GM12878 (cell line): ENCODE measurements at regions of chr20 and their contacts with region 1.

Region 1: GRCh38 chr20:45044084-45044573 is 56.8 kb downstream of the KCNS1 start:
- DNase-seq: no peak
- ATAC-seq: peak; percentile 88
- H3K4me3 ChIP-seq: no peak overlapping the region
- H3K27ac ChIP-seq: no peak overlapping the region
- H3K4me1 ChIP-seq: no peaks in the 10 kb centered on the region
- H3K27me3 ChIP-seq: no peaks in the 10 kb centered on the region
- CTCF ChIP-seq: peak; percentile 83 to 89 (median 83)
- EP300 ChIP-seq: no peak
- POLR2A ChIP-seq: no peak
- RAD21 ChIP-seq: peak; percentile 91

Region 2: GRCh38 chr20:44790638-44791393 is 253.3 kb before region 1 on chr20:
- CTCF ChIA-PET with region 1: no interaction called
- POLR2A ChIA-PET with region 1: no interaction called
- RAD21 ChIA-PET with region 1: no interaction called
- SMC1A ChIA-PET with region 1: no interaction called
- in situ Hi-C with region 1: no loop called
- intact Hi-C with region 1: no loop called
- DNase-seq: no peak
- ATAC-seq: no peak
- H3K4me3 ChIP-seq: no peak overlapping the region
- H3K27ac ChIP-seq: no peak overlapping the region
- H3K4me1 ChIP-seq: no peaks in the 10 kb centered on the region
- H3K27me3 ChIP-seq: no peaks in the 10 kb centered on the region; a peak in 2 of 4 replicates
- CTCF ChIP-seq: no peak
- EP300 ChIP-seq: no peak
- POLR2A ChIP-seq: no peak
- RAD21 ChIP-seq: no peak

Region 3: GRCh38 chr20:45011108-45011526 is 33.0 kb before region 1 on chr20:
- CTCF ChIA-PET with region 1: interaction called, 11 read pairs
- POLR2A ChIA-PET with region 1: no interaction called
- RAD21 ChIA-PET with region 1: interaction called, 3 read pairs
- SMC1A ChIA-PET with region 1: interaction called, 5 read pairs
- in situ Hi-C with region 1: no loop called
- intact Hi-C with region 1: no loop called
- DNase-seq: no peak
- ATAC-seq: peak; percentile 79
- H3K4me3 ChIP-seq: no peak overlapping the region
- H3K27ac ChIP-seq: no peak overlapping the region
- H3K4me1 ChIP-seq: no peaks in the 10 kb centered on the region
- H3K27me3 ChIP-seq: no peaks in the 10 kb centered on the region
- CTCF ChIP-seq: peak; percentile 55 to 64 (median 61)
- EP300 ChIP-seq: no peak
- POLR2A ChIP-seq: no peak
- RAD21 ChIP-seq: peak; percentile 67

Region 4: GRCh38 chr20:45061244-45061643 is 17.1 kb after region 1 on chr20:
- CTCF ChIA-PET with region 1: interaction called, 30 read pairs
- POLR2A ChIA-PET with region 1: interaction called, 3 read pairs
- RAD21 ChIA-PET with region 1: interaction called, 15 read pairs
- SMC1A ChIA-PET with region 1: interaction called, 5 read pairs
- in situ Hi-C with region 1: no loop called
- intact Hi-C with region 1: no loop called
- DNase-seq: no peak
- ATAC-seq: no peak; the same call in 2 of the 3 replicates
- H3K4me3 ChIP-seq: no peak overlapping the region
- H3K27ac ChIP-seq: no peak overlapping the region
- H3K4me1 ChIP-seq: no peaks in the 10 kb centered on the region
- H3K27me3 ChIP-seq: no peaks in the 10 kb centered on the region
- CTCF ChIP-seq: no peak
- EP300 ChIP-seq: no peak
- POLR2A ChIP-seq: no peak
- RAD21 ChIP-seq: no peak

Region 5: GRCh38 chr20:45080867-45081624 is 36.9 kb after region 1 on chr20:
- CTCF ChIA-PET with region 1: interaction called, 15 read pairs
- POLR2A ChIA-PET with region 1: no interaction called
- RAD21 ChIA-PET with region 1: interaction called, 6 read pairs
- SMC1A ChIA-PET with region 1: interaction called, 5 read pairs
- in situ Hi-C with region 1: no loop called
- intact Hi-C with region 1: no loop called
- DNase-seq: no peak
- ATAC-seq: peak; percentile 75
- H3K4me3 ChIP-seq: no peak overlapping the region
- H3K27ac ChIP-seq: no peak overlapping the region
- H3K4me1 ChIP-seq: no peaks in the 10 kb centered on the region
- H3K27me3 ChIP-seq: no peaks in the 10 kb centered on the region
- CTCF ChIP-seq: peak; percentile 10 to 31 (median 27); a peak in 2 of 6 replicates
- EP300 ChIP-seq: no peak
- POLR2A ChIP-seq: no peak
- RAD21 ChIP-seq: no peak

Region 6: DNA sequence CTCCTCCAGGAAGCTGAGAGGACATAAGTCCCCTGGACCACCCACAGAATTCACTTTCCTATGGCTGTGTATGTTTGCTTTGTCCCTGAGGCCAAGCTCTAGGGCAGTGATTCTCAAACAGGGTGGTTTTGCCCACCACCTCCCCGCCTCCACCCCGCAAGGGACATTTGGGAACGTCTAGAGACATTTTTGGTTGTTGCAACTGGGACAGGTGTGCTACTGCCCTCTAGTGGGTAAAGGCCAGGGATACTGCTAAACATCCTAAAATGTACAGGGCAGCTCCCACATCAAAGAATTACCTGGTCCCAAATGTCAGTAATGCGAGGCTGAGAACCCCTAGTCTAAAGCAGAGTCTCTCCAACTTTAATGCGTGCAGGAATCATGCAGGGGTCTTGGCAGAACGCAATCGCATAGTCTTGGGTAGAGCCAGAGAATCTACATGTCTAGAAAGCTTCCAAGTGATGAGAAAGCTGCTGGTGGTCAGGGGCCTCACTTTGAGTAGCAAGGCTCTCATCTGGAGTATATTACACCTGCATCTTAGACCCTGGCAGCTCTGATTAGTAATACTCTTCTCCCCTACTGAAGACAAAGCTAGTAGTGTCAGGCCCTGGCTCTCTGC is 51.7 kb after region 1 on chr20:
- CTCF ChIA-PET with region 1: interaction called, 162 read pairs
- POLR2A ChIA-PET with region 1: no interaction called
- RAD21 ChIA-PET with region 1: interaction called, 85 read pairs
- SMC1A ChIA-PET with region 1: interaction called, 108 read pairs
- in situ Hi-C with region 1: no loop called
- intact Hi-C with region 1: loop called (anchors 1 kb)
- DNase-seq: peak; percentile 27
- ATAC-seq: peak; percentile 82
- H3K4me3 ChIP-seq: no peak overlapping the region
- H3K27ac ChIP-seq: no peak overlapping the region
- H3K4me1 ChIP-seq: no peaks in the 10 kb centered on the region
- H3K27me3 ChIP-seq: peaks cover under 1 to 7% of the 10 kb centered on the region in 2 experiments; a peak in 3 of 4 replicates
- CTCF ChIP-seq: peak; percentile 69 to 86 (median 84)
- EP300 ChIP-seq: no peak
- POLR2A ChIP-seq: no peak
- RAD21 ChIP-seq: peak; percentile 86

Region 7: DNA sequence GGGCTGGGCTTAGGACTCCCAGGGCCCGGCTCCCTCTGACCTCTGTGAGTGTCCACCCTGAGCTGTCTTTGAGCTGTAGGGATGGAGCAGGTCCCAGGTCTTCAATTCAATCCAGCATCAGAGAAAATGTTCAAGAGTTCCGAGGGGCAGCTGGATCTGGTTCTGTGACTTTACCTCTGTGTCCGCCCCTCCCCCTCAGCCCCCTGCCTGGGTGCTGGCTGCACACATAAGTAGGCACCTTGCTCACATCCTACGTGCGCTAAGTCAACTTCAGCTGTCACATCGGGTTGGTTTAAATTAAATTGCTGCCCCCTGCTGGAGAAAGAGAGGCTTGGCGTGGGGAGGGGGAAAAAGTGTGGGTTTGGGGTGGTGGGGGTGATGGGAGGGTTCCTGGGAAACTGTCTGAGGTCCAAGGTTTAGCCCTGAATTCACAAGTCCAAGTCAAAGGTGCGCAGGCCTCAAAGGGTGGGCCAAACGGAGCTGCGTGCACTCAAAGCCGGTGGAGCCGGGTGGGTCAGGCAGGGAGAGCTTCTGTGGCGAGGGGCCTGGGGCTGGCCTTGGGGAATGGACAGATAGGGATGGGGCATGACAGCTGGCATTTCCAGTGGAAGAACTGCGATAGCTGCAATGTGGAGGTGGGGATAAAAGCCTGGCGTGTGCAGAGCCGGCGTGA is 67.8 kb after region 1 on chr20:
- CTCF ChIA-PET with region 1: interaction called, 67 read pairs
- POLR2A ChIA-PET with region 1: no interaction called
- RAD21 ChIA-PET with region 1: interaction called, 14 read pairs
- SMC1A ChIA-PET with region 1: interaction called, 25 read pairs
- in situ Hi-C with region 1: no loop called
- intact Hi-C with region 1: no loop called
- DNase-seq: no peak
- ATAC-seq: peak; percentile 38; the same call in 2 of the 3 replicates
- H3K4me3 ChIP-seq: no peak overlapping the region
- H3K27ac ChIP-seq: no peak overlapping the region
- H3K4me1 ChIP-seq: no peaks in the 10 kb centered on the region
- H3K27me3 ChIP-seq: no peaks in the 10 kb centered on the region; a peak in 1 of 4 replicates
- CTCF ChIP-seq: peak; percentile 29 to 39 (median 36); a peak in 5 of 6 replicates
- EP300 ChIP-seq: no peak
- POLR2A ChIP-seq: no peak
- RAD21 ChIP-seq: peak; percentile 27

Region 8: GRCh38 chr20:45268531-45268930 is 224.4 kb after region 1 on chr20:
- CTCF ChIA-PET with region 1: no interaction called
- POLR2A ChIA-PET with region 1: no interaction called
- RAD21 ChIA-PET with region 1: no interaction called
- SMC1A ChIA-PET with region 1: no interaction called
- in situ Hi-C with region 1: no loop called
- intact Hi-C with region 1: no loop called
- DNase-seq: no peak
- ATAC-seq: no peak
- H3K4me3 ChIP-seq: no peak overlapping the region
- H3K27ac ChIP-seq: no peak overlapping the region
- H3K4me1 ChIP-seq: no peaks in the 10 kb centered on the region
- H3K27me3 ChIP-seq: peaks cover 3% of the 10 kb centered on the region in 2 experiments; a peak in 2 of 4 replicates
- CTCF ChIP-seq: no peak
- EP300 ChIP-seq: no peak
- POLR2A ChIP-seq: no peak
- RAD21 ChIP-seq: no peak